ENCODE measurements at regions of chr3 and their contacts with region 1.

Region 1: DNA sequence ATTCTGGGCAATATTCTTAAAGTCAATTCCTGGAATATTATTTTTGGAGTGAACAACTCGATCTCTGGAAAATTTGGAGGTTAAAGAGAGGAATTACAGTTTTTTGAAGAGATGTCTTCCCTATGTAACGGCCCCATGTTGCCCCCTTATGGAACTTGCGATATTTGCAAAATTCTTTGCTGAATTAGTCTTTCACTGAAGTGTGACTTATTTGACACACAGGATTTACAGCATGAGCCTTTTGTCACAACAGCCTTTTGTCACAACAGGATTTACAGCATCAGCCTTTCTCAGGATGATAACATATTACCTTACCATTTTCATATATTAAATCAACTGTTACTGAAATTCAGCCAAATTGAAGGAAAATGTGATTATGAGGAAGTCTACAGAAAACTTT is 37.8 kb upstream of the SPTSSB start:
- DNase-seq: peak; percentile 45 to 72
- H3K4me3 ChIP-seq: no peak overlapping the region
- H3K4me3 Mint-ChIP-seq: no peak overlapping the region
- H3K27ac Mint-ChIP-seq: peak overlapping the region; percentile 45
- H3K4me1 ChIP-seq: peaks cover 82% of the 10 kb centered on the region
- H3K4me1 Mint-ChIP-seq: peaks cover 17% of the 10 kb centered on the region
- H3K27me3 ChIP-seq: no peaks in the 10 kb centered on the region
- H3K27me3 Mint-ChIP-seq: no peaks in the 10 kb centered on the region
- CTCF ChIP-seq: peak; percentile 50 to 64

Region 2: DNA sequence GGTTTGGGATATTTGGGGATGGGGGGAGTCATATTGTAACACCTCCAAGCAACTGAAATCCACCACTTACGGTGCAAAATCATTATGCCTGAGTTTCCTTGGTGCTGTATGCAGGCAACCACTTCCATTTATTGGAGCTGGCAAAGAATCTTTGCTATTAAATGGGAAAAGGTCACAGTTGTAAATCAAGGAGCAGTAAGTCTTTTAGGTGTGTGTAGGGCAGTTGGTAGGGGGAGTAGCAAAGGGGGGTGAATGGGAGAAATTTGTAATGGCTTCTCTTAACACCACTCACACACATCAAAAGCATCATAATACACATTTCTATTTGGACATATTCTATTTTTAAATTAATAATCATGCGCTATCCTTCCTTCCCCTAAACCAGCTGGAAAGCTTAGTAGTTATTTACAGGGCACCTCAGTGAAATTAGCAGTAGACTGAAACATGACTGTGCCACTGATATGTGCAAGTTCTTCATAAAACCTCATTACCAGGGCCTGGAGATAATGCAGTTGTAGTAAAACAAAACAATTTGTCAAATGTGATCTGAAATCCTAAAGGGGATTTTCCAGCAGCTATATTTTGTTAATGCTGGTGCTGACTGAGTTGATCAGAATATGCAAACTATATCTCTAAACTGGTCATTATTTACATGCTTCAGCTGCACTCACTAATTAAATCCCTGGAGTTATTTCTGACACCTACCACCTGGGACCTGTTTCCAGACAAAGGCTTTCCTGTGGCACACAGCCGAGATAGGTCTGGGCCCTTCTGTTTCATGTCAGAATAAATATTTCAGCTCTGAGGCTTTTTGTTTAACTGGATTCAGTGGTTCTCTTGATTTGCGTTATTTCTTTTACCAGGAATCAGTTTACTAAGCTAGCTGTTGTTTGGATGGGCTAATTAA is 394.0 kb before region 1 on chr3:
- CTCF ChIA-PET with region 1: no interaction called
- POLR2A ChIA-PET with region 1: no interaction called
- intact Hi-C with region 1: no loop called
- DNase-seq: no peak
- H3K4me3 ChIP-seq: no peak overlapping the region
- H3K4me3 Mint-ChIP-seq: no peak overlapping the region
- H3K27ac Mint-ChIP-seq: no peak overlapping the region
- H3K4me1 ChIP-seq: no peaks in the 10 kb centered on the region
- H3K4me1 Mint-ChIP-seq: no peaks in the 10 kb centered on the region
- H3K27me3 ChIP-seq: no peaks in the 10 kb centered on the region
- H3K27me3 Mint-ChIP-seq: peaks cover 3% of the 10 kb centered on the region
- CTCF ChIP-seq: no peak

Region 3: DNA sequence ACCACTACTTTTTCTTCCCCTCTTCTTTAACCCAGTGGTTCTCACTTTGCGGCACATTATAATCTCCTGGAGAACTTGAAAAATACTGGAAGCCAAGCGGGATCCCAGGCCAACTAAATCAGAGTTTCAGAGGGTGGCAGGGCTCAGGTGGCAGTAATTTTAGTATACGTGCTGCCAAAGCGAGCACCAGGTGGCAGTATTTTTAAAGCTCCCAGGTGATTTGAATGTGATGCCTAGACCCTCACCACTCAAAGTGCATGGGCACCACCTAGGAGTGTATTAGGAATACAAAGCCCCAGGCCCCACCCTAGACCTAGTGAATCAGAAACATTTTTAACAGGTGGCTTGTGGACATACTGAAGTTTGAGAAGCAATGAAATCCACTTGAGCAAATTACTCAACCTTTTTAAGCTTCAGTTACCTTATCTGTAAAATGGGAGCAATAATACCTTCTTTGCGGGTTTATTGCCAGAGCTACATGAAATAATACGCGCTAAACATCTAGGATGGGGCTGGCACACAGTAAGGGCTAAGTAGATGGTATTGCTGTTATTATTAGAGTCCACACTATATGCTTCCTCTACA is 312.2 kb before region 1 on chr3:
- CTCF ChIA-PET with region 1: no interaction called
- POLR2A ChIA-PET with region 1: no interaction called
- intact Hi-C with region 1: loop called (anchors 1 kb)
- DNase-seq: peak; percentile 45 to 51
- H3K4me3 ChIP-seq: no peak overlapping the region
- H3K4me3 Mint-ChIP-seq: no peak overlapping the region
- H3K27ac Mint-ChIP-seq: no peak overlapping the region
- H3K4me1 ChIP-seq: peaks cover 17% of the 10 kb centered on the region
- H3K4me1 Mint-ChIP-seq: peaks cover 7% of the 10 kb centered on the region
- H3K27me3 ChIP-seq: no peaks in the 10 kb centered on the region
- H3K27me3 Mint-ChIP-seq: no peaks in the 10 kb centered on the region
- CTCF ChIP-seq: peak; percentile 52 to 60

Region 4: GRCh38 chr3:161220850-161221753 is 188.0 kb before region 1 on chr3 and contains the start of gene NMD3:
- CTCF ChIA-PET with region 1: no interaction called
- POLR2A ChIA-PET with region 1: no interaction called
- intact Hi-C with region 1: loop called (anchors 2 kb)
- DNase-seq: peak; percentile 95
- H3K4me3 ChIP-seq: peak within 1 kb of the TSS; percentile 86
- H3K4me3 Mint-ChIP-seq: peak within 1 kb of the TSS; percentile 80
- H3K27ac Mint-ChIP-seq: peak within 1 kb of the TSS; percentile 81
- H3K4me1 ChIP-seq: peaks cover 6% of the 10 kb centered on the region; the same call in 1 of the 2 replicates
- H3K4me1 Mint-ChIP-seq: peaks cover 6% of the 10 kb centered on the region
- H3K27me3 ChIP-seq: no peaks in the 10 kb centered on the region
- H3K27me3 Mint-ChIP-seq: no peaks in the 10 kb centered on the region
- CTCF ChIP-seq: no peak
- total RNA-seq, gene NMD3: 61.7 and 62.4 TPM in 2 replicates

Region 5: GRCh38 chr3:161273589-161274218 is 135.4 kb before region 1 on chr3:
- CTCF ChIA-PET with region 1: interaction called, 3 read pairs
- POLR2A ChIA-PET with region 1: no interaction called
- intact Hi-C with region 1: loop called (anchors 1 kb)
- DNase-seq: peak in 1 of 2 experiments; percentile 26
- H3K4me3 ChIP-seq: no peak overlapping the region
- H3K4me3 Mint-ChIP-seq: no peak overlapping the region
- H3K27ac Mint-ChIP-seq: no peak overlapping the region
- H3K4me1 ChIP-seq: peaks cover 10% of the 10 kb centered on the region
- H3K4me1 Mint-ChIP-seq: peaks cover 4% of the 10 kb centered on the region
- H3K27me3 ChIP-seq: no peaks in the 10 kb centered on the region
- H3K27me3 Mint-ChIP-seq: no peaks in the 10 kb centered on the region
- CTCF ChIP-seq: peak; percentile 17 to 62

Region 6: GRCh38 chr3:161305095-161305991 is 103.7 kb before region 1 on chr3:
- CTCF ChIA-PET with region 1: no interaction called
- POLR2A ChIA-PET with region 1: no interaction called
- intact Hi-C with region 1: loop called (anchors 1 kb)
- DNase-seq: peak in 1 of 2 experiments; percentile 26
- H3K4me3 ChIP-seq: no peak overlapping the region
- H3K4me3 Mint-ChIP-seq: no peak overlapping the region
- H3K27ac Mint-ChIP-seq: no peak overlapping the region
- H3K4me1 ChIP-seq: no peaks in the 10 kb centered on the region
- H3K4me1 Mint-ChIP-seq: no peaks in the 10 kb centered on the region
- H3K27me3 ChIP-seq: no peaks in the 10 kb centered on the region
- H3K27me3 Mint-ChIP-seq: no peaks in the 10 kb centered on the region
- CTCF ChIP-seq: peak; percentile 54 to 65

Region 7: GRCh38 chr3:161323926-161324621 is 85.0 kb before region 1 on chr3:
- CTCF ChIA-PET with region 1: no interaction called
- POLR2A ChIA-PET with region 1: no interaction called
- intact Hi-C with region 1: no loop called
- DNase-seq: no peak
- H3K4me3 ChIP-seq: no peak overlapping the region
- H3K4me3 Mint-ChIP-seq: no peak overlapping the region
- H3K27ac Mint-ChIP-seq: peak overlapping the region; percentile 27
- H3K4me1 ChIP-seq: peaks cover 11% of the 10 kb centered on the region
- H3K4me1 Mint-ChIP-seq: peaks cover 11% of the 10 kb centered on the region
- H3K27me3 ChIP-seq: no peaks in the 10 kb centered on the region
- H3K27me3 Mint-ChIP-seq: no peaks in the 10 kb centered on the region
- CTCF ChIP-seq: no peak

Region 8: GRCh38 chr3:161371430-161372326 is 37.4 kb before region 1 on chr3 and contains the start of gene SPTSSB:
- CTCF ChIA-PET with region 1: interaction called, 5 read pairs
- POLR2A ChIA-PET with region 1: interaction called, 6 read pairs
- intact Hi-C with region 1: loop called (anchors 1 kb)
- DNase-seq: peak; percentile 91 to 93
- H3K4me3 ChIP-seq: peak within 1 kb of the TSS; percentile 67
- H3K4me3 Mint-ChIP-seq: peak within 1 kb of the TSS; percentile 92
- H3K27ac Mint-ChIP-seq: peak within 1 kb of the TSS; percentile 92
- H3K4me1 ChIP-seq: no peaks in the 10 kb centered on the region
- H3K4me1 Mint-ChIP-seq: peaks cover 17% of the 10 kb centered on the region
- H3K27me3 ChIP-seq: no peaks in the 10 kb centered on the region
- H3K27me3 Mint-ChIP-seq: no peaks in the 10 kb centered on the region
- CTCF ChIP-seq: peak in 1 of 2 experiments; percentile 53
- total RNA-seq, gene SPTSSB: 45.9 and 51.6 TPM in 2 replicates

Region 9: DNA sequence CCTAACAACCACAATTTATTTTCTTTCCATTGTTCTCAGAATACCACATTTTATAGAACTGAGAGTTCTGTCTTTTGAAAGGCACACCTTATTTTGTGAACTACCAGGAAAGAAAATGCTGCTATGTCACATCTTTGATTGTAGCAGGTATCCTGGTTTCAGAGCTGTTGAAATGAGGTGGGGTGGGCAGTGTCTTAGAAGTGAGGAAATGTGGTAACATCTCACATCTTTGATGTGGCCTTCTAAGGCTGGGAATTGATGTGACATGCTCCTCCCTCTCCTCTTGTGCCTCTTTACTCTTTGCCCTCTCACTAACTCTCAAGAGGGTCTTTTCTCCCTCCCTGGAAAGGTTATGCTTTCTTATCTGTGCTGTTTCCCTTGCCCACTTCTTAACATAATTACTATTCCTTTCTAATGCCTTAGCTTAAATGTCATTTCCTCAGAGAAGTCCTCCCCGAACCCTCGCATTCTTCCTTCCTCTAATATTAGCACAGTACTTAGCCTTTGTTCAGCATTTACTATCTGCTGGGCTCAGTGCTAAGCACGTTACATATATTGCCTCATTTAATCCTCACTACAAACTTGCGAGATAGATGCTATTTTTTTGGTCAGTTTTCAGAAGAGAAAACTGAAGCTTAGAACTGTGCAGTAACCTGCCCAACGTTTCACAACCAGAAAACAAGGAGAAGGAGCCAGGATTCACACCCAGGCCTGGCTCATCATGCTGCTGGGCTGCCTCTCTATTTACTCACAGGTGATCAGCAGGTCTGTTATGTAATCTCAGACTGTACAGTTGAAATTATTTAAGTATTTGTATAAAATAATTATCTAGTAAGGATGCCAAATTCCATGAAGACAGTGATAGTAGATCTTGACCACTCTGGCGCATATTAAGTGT is 13.7 kb before region 1 on chr3:
- CTCF ChIA-PET with region 1: no interaction called
- POLR2A ChIA-PET with region 1: interaction called, 4 read pairs
- intact Hi-C with region 1: loop called (anchors 1 kb)
- DNase-seq: no peak
- H3K4me3 ChIP-seq: no peak overlapping the region
- H3K4me3 Mint-ChIP-seq: peak overlapping the region; percentile 5
- H3K27ac Mint-ChIP-seq: peak overlapping the region; percentile 64
- H3K4me1 ChIP-seq: peaks cover 32% of the 10 kb centered on the region
- H3K4me1 Mint-ChIP-seq: peaks cover 39% of the 10 kb centered on the region
- H3K27me3 ChIP-seq: no peaks in the 10 kb centered on the region
- H3K27me3 Mint-ChIP-seq: no peaks in the 10 kb centered on the region
- CTCF ChIP-seq: no peak

Region 10: GRCh38 chr3:161471211-161471610 is 62.1 kb after region 1 on chr3:
- CTCF ChIA-PET with region 1: no interaction called
- POLR2A ChIA-PET with region 1: no interaction called
- intact Hi-C with region 1: no loop called
- DNase-seq: no peak
- H3K4me3 ChIP-seq: no peak overlapping the region
- H3K4me3 Mint-ChIP-seq: no peak overlapping the region
- H3K27ac Mint-ChIP-seq: no peak overlapping the region
- H3K4me1 ChIP-seq: no peaks in the 10 kb centered on the region
- H3K4me1 Mint-ChIP-seq: no peaks in the 10 kb centered on the region
- H3K27me3 ChIP-seq: no peaks in the 10 kb centered on the region
- H3K27me3 Mint-ChIP-seq: no peaks in the 10 kb centered on the region
- CTCF ChIP-seq: no peak

Measured in Caco-2 (cell line).